B cell (primary cell): ENCODE measurements at regions of chr2 and their contacts with region 1.

Region 1: GRCh38 chr2:8544786-8545694 is 136.8 kb upstream of the ID2 start:
- DNase-seq: peak; percentile 70
- ATAC-seq: peak; percentile 74
- H3K4me3 ChIP-seq: no peak overlapping the region
- H3K4me3 Mint-ChIP-seq: peak overlapping the region; percentile 54
- H3K27ac ChIP-seq: no peak overlapping the region
- H3K27ac Mint-ChIP-seq: no peak overlapping the region
- H3K4me1 ChIP-seq: peaks cover 35 to 36% of the 10 kb centered on the region in 2 donors
- H3K4me1 Mint-ChIP-seq: peaks cover 35% of the 10 kb centered on the region
- H3K27me3 ChIP-seq: peaks cover 0 to 70% (median 17%) of the 10 kb centered on the region in 4 experiments
- H3K27me3 Mint-ChIP-seq: peaks cover 58% of the 10 kb centered on the region
- CTCF ChIP-seq: peak; percentile 39

Region 2: DNA sequence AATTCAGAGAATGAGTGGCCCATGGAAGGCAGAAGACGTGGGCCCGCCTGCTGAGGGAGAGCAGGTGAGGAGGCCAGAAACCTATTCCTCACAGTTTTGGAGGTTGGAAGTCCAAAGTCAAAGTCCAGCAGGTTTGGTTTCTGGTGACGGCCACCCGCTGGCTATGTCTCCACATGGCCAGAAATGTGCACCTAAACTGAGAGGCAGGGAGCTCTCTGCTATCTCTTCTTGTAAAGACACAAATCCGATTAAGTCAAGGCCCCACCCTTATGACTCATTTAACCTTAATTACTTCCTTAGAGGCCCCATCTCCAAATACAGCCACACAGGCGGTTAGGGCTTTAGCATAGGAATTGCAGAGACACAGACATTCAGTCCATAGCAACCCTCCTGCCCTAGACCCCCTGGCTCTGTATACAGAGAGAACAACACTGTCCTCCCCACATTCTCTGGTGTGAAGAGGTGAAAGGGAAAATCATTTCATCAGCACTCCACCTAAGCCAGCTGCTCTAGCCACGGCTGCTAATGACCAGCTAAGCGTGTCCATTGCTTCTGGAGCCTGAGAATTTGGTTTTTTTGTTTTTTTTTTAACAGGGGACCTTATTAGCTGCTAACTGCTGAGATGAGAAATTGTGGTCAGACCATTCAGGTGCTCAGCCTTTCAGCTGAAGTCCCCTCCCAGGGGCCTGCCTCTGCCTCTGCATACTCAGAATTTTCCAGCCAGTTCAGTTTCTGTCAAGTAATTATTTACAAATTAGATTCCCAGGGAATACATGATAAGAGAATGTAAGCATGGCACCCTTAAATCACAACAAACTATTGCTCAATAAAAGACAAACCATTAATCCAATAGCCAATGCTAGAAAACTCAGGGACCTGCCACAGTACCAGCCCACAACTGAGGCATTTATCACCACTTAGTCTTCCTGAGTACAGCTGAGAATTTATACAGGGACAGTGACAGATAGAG is 231.9 kb before region 1 on chr2:
- CTCF ChIA-PET with region 1: no interaction called
- POLR2A ChIA-PET with region 1: no interaction called
- intact Hi-C with region 1: no loop called
- DNase-seq: no peak
- ATAC-seq: no peak
- H3K4me3 ChIP-seq: no peak overlapping the region
- H3K4me3 Mint-ChIP-seq: no peak overlapping the region
- H3K27ac ChIP-seq: no peak overlapping the region
- H3K27ac Mint-ChIP-seq: no peak overlapping the region
- H3K4me1 ChIP-seq: peaks cover 19 to 31% of the 10 kb centered on the region in 2 donors
- H3K4me1 Mint-ChIP-seq: peaks cover 14% of the 10 kb centered on the region
- H3K27me3 ChIP-seq: peaks cover 0 to 76% (median 36%) of the 10 kb centered on the region in 4 experiments
- H3K27me3 Mint-ChIP-seq: peaks cover 85% of the 10 kb centered on the region
- CTCF ChIP-seq: no peak

Region 3: GRCh38 chr2:8456151-8456845 is 88.7 kb before region 1 on chr2:
- CTCF ChIA-PET with region 1: no interaction called
- POLR2A ChIA-PET with region 1: no interaction called
- intact Hi-C with region 1: no loop called
- DNase-seq: no peak
- ATAC-seq: no peak
- H3K4me3 ChIP-seq: no peak overlapping the region
- H3K4me3 Mint-ChIP-seq: no peak overlapping the region
- H3K27ac ChIP-seq: no peak overlapping the region
- H3K27ac Mint-ChIP-seq: no peak overlapping the region
- H3K4me1 ChIP-seq: peaks cover 14 to 19% of the 10 kb centered on the region in 2 donors
- H3K4me1 Mint-ChIP-seq: peaks cover 15% of the 10 kb centered on the region
- H3K27me3 ChIP-seq: peaks cover 0 to 91% (median 60%) of the 10 kb centered on the region in 4 experiments
- H3K27me3 Mint-ChIP-seq: peaks cover 91% of the 10 kb centered on the region
- CTCF ChIP-seq: no peak

Region 4: GRCh38 chr2:8514796-8515758 is 30.0 kb before region 1 on chr2:
- CTCF ChIA-PET with region 1: no interaction called
- POLR2A ChIA-PET with region 1: no interaction called
- intact Hi-C with region 1: loop called (anchors 2 kb)
- DNase-seq: peak; percentile 56
- ATAC-seq: peak; percentile 72
- H3K4me3 ChIP-seq: no peak overlapping the region
- H3K4me3 Mint-ChIP-seq: peak overlapping the region; percentile 11
- H3K27ac ChIP-seq: no peak overlapping the region
- H3K27ac Mint-ChIP-seq: no peak overlapping the region
- H3K4me1 ChIP-seq: peaks cover 17 to 23% of the 10 kb centered on the region in 2 donors
- H3K4me1 Mint-ChIP-seq: peaks cover 25% of the 10 kb centered on the region
- H3K27me3 ChIP-seq: peaks cover 0 to 43% (median 6%) of the 10 kb centered on the region in 4 experiments
- H3K27me3 Mint-ChIP-seq: peaks cover 59% of the 10 kb centered on the region
- CTCF ChIP-seq: no peak

Region 5: DNA sequence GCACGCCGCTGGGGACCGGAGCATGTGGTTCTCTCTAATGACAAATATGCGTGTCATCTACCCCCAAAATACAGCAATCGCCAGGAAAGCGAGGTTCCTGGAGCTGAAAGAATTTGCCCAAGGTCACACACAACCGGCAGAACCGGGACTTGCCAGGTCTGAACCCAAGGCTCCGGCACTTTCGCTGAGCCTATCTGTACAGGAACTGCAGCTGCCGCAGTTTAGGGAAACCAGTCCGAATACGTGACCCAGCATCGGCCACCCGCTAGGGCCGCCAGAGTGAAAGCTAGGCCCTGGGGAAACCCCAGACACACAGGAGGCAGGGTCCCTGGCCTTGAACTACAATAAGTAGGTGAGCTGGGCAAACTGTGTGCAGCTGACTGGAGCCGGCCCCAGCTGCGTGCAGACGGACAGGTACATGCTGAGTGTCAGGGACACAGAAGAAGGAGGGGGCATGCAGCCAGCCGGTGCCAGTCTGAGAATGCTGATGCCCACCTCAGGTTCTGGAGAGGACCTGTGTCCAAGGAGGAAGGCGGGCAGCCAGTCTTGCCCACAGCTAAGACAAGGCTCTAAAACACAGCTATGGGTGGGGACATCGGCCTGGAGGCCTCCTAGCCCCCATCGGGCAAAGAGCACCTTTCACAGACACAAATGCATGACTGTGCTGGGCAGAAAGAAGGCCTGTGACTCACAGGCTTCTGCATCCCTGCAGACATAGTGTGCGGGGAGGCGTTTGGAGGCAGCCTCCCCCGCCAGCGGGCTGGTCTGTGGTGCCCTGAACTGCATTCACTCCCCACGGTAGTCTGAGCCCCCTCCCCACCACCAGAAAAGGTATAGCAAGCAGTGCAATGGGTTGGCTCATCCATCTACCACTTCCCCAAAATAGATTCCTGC is 29.4 kb after region 1 on chr2:
- CTCF ChIA-PET with region 1: no interaction called
- POLR2A ChIA-PET with region 1: no interaction called
- intact Hi-C with region 1: loop called (anchors 5 kb)
- DNase-seq: peak; percentile 51
- ATAC-seq: peak; percentile 16
- H3K4me3 ChIP-seq: no peak overlapping the region
- H3K4me3 Mint-ChIP-seq: peak overlapping the region; percentile 76
- H3K27ac ChIP-seq: no peak overlapping the region
- H3K27ac Mint-ChIP-seq: no peak overlapping the region
- H3K4me1 ChIP-seq: peaks cover 52 to 70% of the 10 kb centered on the region in 2 donors
- H3K4me1 Mint-ChIP-seq: peaks cover 67% of the 10 kb centered on the region
- H3K27me3 ChIP-seq: peaks cover 0 to 68% (median 20%) of the 10 kb centered on the region in 4 experiments
- H3K27me3 Mint-ChIP-seq: peaks cover 62% of the 10 kb centered on the region
- CTCF ChIP-seq: no peak